GM10248 (cell line): ENCODE measurements at regions of chr18 and their contacts with region 1.

Region 1: DNA sequence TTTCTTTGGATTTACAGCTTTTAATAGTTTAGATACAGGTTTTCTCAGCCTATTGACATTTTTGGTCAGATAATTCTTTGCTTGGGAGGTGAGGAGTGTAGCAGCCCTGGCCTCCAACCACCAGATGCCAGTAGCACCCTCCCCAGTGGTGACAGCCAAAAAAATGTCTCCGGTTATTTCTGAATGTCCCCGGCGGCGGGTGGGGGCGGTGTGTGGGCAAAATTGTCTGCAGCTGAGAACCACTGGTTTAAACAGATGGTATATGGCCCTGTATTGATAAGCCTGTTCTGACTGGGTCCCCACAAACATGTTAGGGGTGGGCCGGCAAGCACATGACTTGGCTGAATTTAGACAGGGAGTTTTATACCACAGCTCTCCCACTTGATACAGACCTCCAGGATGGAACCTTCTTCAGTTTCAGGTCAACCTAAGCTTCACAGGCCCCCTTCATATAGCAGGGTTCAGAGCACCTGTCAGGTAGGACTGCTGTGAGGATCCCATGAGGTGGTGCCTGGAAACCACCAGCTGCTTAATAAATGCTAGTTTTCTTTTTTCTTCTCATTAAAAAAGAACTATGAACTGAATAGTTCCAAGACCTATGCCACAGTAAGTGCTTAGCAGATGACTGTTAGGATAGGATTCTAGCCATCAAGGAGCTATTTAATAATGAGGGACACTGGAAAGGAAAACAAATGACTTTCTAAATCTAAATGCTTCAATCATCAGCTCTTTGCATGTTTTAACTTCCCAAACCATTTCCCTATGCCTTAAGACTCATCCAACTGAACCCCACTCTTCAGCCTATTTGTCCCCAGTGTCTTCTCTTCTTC is 18.1 kb downstream of the LPIN2 start:
- DNase-seq: peak; percentile 60
- CTCF ChIP-seq: peak; percentile 68

Region 2: GRCh38 chr18:2716394-2717326 is 278.2 kb before region 1 on chr18:
- CTCF ChIA-PET with region 1: no interaction called
- POLR2A ChIA-PET with region 1: no interaction called
- DNase-seq: no peak
- CTCF ChIP-seq: no peak

Region 3: GRCh38 chr18:2978646-2979045 is 16.2 kb before region 1 on chr18:
- CTCF ChIA-PET with region 1: interaction called, 82 read pairs
- POLR2A ChIA-PET with region 1: no interaction called
- DNase-seq: no peak
- CTCF ChIP-seq: no peak

Region 4: GRCh38 chr18:3012964-3013804 is 18.4 kb after region 1 on chr18 and contains the start of gene LPIN2:
- CTCF ChIA-PET with region 1: interaction called, 31 read pairs
- POLR2A ChIA-PET with region 1: interaction called, 12 read pairs
- DNase-seq: peak; percentile 98
- CTCF ChIP-seq: no peak

Region 5: DNA sequence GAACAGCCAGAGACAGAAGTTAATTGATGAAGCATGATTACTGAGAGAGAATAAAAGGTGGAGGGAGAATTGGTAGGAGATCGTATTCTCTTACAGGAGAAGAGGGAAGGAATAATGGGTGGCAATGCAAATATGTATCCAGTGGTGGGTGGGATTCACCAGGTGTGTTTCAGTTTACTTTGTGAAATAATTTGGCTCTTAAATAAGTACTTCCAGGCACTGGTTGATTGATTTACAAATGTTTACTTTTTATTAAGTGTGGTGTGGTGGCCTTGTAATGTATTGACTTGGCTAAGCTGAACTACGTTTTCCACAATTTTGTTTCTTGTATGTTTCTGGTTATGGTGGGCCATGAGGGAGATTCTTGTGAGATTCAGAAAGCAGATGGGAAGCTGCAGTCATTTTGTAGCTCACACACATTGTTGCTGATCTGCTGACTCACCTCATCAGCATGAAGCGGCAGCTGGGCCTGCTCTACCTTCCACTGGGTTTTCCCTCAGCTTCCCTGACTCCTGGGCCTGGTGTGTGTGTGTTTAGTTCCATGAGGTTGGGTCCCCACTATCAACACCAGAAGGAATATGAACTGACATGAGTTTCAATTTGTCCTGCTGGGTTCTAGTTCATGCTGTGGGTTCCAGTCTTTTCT is 299.7 kb after region 1 on chr18:
- CTCF ChIA-PET with region 1: no interaction called
- POLR2A ChIA-PET with region 1: no interaction called
- DNase-seq: no peak
- CTCF ChIP-seq: no peak